ENCODE measurements at regions of chr3 and their contacts with region 1.

Region 1: GRCh38 chr3:59386165-59386564 is 336.3 kb upstream of the CFAP20DC start:
- DNase-seq: no peak
- H3K4me3 Mint-ChIP-seq: peak overlapping the region; percentile 31
- H3K27ac Mint-ChIP-seq: peak overlapping the region; percentile 98
- H3K4me1 Mint-ChIP-seq: peaks cover 85% of the 10 kb centered on the region
- H3K27me3 Mint-ChIP-seq: no peaks in the 10 kb centered on the region

Region 2: DNA sequence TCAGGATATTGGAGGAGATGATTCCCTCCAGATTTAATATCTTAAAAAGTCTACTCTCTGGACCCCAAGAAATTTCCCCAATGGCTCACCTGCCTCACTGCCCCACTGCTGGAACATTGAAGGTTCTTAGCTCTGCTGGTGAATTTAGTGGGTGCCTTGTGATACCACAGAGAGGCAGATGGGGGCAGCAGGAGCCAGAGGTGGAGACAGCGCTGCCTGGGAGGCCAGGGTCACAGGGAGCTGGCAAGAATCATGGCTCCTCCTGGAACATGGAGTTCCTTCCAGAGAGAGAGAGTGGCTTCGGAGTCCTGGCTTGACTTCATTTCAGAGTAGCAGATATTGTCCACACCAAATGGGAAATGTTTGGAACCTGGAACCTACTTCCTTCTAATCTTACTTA is 72.8 kb before region 1 on chr3:
- intact Hi-C with region 1: loop called (anchors 1 kb)
- DNase-seq: peak; percentile 79
- H3K4me3 Mint-ChIP-seq: no peak overlapping the region
- H3K27ac Mint-ChIP-seq: no peak overlapping the region
- H3K4me1 Mint-ChIP-seq: peaks cover 40% of the 10 kb centered on the region
- H3K27me3 Mint-ChIP-seq: no peaks in the 10 kb centered on the region

Region 3: GRCh38 chr3:59480486-59480995 is 94.4 kb after region 1 on chr3:
- intact Hi-C with region 1: loop called (anchors 1 kb)
- DNase-seq: peak; percentile 66
- H3K4me3 Mint-ChIP-seq: peak overlapping the region; percentile 67
- H3K27ac Mint-ChIP-seq: peak overlapping the region; percentile 83
- H3K4me1 Mint-ChIP-seq: peaks cover 26% of the 10 kb centered on the region
- H3K27me3 Mint-ChIP-seq: no peaks in the 10 kb centered on the region

Region 4: DNA sequence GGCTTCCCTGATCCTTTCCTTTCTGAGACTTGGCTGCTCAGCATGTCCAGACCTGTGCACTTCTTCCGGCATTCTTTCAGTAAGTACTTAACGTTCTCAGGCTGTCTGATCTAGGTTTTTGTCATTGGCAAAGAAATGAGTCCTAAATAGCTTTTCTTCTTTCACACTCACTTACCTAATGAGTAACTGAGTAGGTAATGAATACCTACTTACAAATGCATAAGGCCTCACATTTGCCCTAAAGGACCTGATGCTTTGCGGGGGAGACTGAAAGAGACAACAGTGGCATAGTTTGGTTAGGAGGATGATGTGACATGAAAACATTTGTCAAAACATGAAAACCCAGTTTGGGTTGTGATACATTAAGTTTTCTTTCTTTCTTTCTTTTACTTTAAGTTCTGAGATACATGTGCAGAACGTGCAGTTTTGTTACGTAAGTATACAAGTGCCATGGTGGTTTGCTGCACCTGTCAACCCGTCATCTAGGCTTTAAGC is 180.4 kb after region 1 on chr3:
- intact Hi-C with region 1: no loop called
- DNase-seq: no peak
- H3K4me3 Mint-ChIP-seq: no peak overlapping the region
- H3K27ac Mint-ChIP-seq: peak overlapping the region; percentile 10
- H3K4me1 Mint-ChIP-seq: peaks cover 9% of the 10 kb centered on the region
- H3K27me3 Mint-ChIP-seq: no peaks in the 10 kb centered on the region

Region 5: DNA sequence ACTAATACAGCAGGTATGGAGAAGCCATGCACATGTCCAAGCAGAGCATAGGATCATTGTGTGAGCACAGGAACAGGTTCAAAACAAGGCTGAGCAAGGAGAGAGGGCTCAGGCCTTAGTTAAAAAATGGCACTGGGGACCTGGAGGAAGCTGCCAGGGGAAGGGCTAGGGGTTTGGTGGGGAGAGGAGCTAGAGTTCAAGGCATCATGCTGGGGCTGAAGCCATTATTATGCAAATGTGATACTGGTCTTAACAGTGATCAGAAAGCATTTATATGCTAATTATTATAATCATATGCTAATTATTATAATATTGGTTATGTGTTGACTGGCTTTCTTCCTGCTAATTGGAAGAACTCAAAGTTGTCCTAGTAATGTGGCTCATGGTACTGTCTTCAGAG is 209.7 kb after region 1 on chr3:
- intact Hi-C with region 1: no loop called
- DNase-seq: no peak
- H3K4me3 Mint-ChIP-seq: no peak overlapping the region
- H3K27ac Mint-ChIP-seq: no peak overlapping the region
- H3K4me1 Mint-ChIP-seq: no peaks in the 10 kb centered on the region
- H3K27me3 Mint-ChIP-seq: peaks cover 9% of the 10 kb centered on the region

Region 6: GRCh38 chr3:59688636-59689035 is 302.5 kb after region 1 on chr3:
- intact Hi-C with region 1: no loop called
- DNase-seq: no peak
- H3K4me3 Mint-ChIP-seq: no peak overlapping the region
- H3K27ac Mint-ChIP-seq: no peak overlapping the region
- H3K4me1 Mint-ChIP-seq: no peaks in the 10 kb centered on the region
- H3K27me3 Mint-ChIP-seq: no peaks in the 10 kb centered on the region

Region 7: GRCh38 chr3:59759298-59760031 is 373.3 kb after region 1 on chr3:
- intact Hi-C with region 1: loop called (anchors 10 kb)
- DNase-seq: no peak
- H3K4me3 Mint-ChIP-seq: peak overlapping the region; percentile 4
- H3K27ac Mint-ChIP-seq: peak overlapping the region; percentile 56
- H3K4me1 Mint-ChIP-seq: peaks cover 49% of the 10 kb centered on the region
- H3K27me3 Mint-ChIP-seq: no peaks in the 10 kb centered on the region

Region 8: DNA sequence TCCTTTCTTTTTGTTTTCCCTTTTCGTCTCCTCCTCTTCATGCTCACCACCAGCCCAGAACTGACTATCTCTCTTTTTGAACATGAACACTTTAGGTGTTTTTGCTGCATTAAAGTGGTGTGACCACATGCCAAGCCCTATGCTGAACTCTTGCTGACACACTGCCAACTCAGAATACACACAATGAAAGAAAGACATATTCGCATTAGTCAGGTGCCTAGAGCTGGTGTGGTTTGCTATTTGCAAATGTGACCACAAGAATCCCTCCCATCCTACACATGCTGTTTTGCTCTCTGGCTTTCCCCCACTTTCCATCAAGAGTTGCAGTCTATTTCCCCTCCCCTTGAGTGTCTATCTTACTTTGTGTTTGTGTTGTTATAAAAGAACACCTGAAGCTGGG is 631.5 kb after region 1 on chr3:
- intact Hi-C with region 1: loop called (anchors 5 kb)
- DNase-seq: peak; percentile 89
- H3K4me3 Mint-ChIP-seq: peak overlapping the region; percentile 73
- H3K27ac Mint-ChIP-seq: peak overlapping the region; percentile 94
- H3K4me1 Mint-ChIP-seq: peaks cover 51% of the 10 kb centered on the region
- H3K27me3 Mint-ChIP-seq: no peaks in the 10 kb centered on the region

Region 9: DNA sequence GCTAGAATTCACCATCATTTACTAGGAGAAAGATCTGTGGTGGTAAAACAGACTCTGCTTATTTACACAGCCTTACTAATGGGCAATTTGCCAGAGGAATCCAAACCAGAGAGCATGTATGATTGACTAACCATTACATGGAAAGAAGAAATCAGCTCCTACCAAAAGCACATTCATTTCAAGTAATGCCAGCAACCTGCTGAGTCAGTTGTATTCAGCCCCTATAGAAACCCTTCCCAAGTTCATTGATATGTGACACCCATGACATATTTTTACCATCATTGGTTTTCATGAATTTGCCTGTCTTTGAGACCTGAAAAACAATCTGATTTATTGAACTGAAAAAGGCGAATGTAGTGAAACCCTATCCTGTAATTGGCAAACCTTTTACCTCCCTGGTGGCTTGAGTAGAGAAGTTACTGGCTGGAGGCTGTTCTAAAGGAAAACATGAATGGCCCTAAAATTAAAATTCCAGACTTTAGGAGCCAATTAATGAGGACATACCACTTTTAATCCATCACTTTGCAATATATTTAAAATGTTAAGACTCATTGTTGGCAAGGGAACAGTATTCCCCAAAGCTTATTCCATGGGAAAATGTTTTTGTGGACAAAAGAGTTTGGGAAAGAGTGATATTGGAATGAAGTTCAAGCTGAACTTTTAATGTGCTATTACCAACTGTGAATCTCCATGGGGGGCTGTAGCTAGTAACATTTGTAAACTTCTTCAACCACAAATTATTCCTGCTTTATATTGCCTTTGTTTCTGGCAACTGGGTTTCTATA is 1322.2 kb after region 1 on chr3:
- intact Hi-C with region 1: no loop called
- DNase-seq: no peak
- H3K4me3 Mint-ChIP-seq: no peak overlapping the region
- H3K27ac Mint-ChIP-seq: no peak overlapping the region
- H3K4me1 Mint-ChIP-seq: no peaks in the 10 kb centered on the region
- H3K27me3 Mint-ChIP-seq: no peaks in the 10 kb centered on the region

Measured in activated CD4-positive, alpha-beta T cell treated with anti-CD3 and anti-CD28 coated beads, Interleukin-2, amount 10 ng/mL, durations not matched to agents 24 days and 14 days (primary cell).